Transverse colon (tissue), 4 donors: ENCODE measurements at regions of chr9 and their contacts with region 1.

Region 1: DNA sequence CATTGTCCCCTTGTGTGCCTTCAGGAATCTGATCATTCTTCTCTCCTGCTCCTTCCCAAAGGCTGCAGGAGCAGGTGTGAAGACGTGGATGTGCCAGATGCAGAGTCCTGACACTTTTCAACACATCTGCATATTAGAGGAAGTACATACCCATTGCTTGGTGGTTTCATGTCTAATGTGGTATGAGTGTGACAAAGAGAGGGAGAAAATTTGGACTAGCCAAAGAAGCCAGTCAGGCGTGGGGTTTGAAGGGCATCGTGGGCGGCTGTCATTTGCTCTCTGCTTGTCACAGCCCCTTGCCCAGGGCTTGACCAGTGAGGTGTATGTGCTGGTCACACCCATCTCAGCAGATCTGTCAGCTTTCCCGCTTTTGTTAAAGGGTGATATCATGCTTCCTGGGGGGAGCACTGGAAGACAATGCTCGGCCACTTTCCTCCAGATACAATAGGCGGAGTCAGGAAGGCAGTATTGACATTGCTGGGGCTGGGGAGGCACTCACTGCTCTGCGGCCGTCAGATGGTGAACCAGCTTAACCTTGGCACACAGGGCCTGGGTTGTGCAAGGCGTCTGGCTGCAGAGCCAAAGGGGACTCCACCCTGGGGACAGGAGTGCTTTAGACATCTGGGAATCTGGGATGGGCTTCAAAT is 8.6 kb downstream of the TEK start:
- DNase-seq: peak; percentile 70
- H3K4me3 ChIP-seq: no peak overlapping the region
- H3K27ac ChIP-seq: peak overlapping the region; percentile 4 to 59 (median 22)
- H3K4me1 ChIP-seq: peaks cover 0 to 13% (median 6%) of the 10 kb centered on the region in 4 donors
- H3K27me3 ChIP-seq: no peaks in the 10 kb centered on the region
- CTCF ChIP-seq: no peak
- EP300 ChIP-seq: no peak
- POLR2A ChIP-seq: no peak

Region 2: DNA sequence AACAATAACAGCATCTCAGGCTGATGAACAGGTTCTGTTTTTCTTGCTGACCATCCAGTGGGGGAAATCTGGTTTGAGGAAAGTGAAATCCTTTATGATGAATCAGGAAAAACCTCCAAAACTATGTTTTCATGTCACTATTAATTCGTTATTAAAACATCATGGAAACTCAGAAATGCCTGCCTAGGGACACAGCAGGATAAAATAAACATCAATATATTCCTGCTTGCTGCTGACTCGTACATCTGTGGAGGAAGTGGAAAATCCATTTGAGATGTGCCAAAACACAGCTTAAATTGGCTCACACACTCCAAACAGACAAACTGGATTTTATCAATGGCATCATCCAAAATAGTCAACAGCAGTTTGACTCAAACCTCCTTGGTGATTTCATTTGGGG is 44.4 kb after region 1 on chr9:
- in situ Hi-C with region 1: no loop called
- intact Hi-C with region 1: loop called (anchors 10 kb)
- DNase-seq: no peak
- H3K4me3 ChIP-seq: no peak overlapping the region
- H3K27ac ChIP-seq: no peak overlapping the region
- H3K4me1 ChIP-seq: peaks cover 0 to 6% (median 2%) of the 10 kb centered on the region in 4 donors
- H3K27me3 ChIP-seq: no peaks in the 10 kb centered on the region
- CTCF ChIP-seq: no peak
- EP300 ChIP-seq: no peak
- POLR2A ChIP-seq: no peak

Region 3: DNA sequence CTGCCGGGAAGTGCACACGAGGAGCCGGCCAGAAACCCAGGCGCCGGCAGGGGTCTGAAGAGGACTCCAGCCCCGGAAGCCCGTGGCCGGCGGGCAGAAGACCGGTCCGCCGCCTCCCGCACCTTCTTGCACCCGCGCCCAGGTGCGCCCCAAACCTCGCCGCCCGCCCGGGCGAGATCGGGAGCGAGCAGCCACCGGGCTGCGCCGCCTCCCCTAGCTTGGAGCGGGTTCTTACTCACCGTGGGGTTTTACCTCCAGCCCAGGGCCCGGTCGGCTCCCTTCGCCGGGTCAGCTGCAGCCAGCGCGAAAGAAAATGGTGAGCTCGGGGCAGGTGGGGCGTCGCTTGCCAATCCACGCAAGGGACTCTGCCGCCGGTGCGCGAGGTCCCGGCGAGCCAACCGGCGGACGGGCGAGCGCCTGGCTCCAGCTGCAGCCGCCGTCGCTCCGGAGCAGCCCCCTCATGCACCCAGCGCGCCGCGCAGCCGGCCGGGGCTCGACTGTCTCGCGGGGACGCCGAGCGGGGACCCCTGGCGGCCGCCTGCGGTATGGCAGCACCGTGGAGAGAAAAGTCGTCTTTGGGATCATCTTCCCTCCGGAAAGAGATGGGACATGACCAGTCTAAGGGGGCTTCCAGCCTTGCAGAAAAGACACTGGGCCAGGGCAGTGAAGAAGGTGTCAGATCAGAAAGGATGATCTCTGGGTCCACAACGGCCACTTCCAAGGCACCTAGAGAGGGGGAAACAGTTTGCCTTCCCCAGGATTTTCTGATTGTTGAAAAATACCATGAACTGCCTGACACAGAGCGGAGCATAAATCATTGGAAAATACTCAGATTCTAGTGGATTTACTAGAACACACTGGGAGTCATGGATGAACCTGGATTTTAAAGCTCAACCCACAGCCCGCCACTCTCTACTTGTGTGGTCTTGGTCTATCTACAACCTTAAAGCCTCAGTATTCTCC is 412.0 kb after region 1 on chr9 and contains the start of gene MOB3B:
- in situ Hi-C with region 1: loop called in 1 of 4 experiments (anchors 25 kb)
- intact Hi-C with region 1: no loop called
- DNase-seq: peak; percentile 88
- H3K4me3 ChIP-seq: peak within 1 kb of the TSS; percentile 57 to 90 (median 79)
- H3K27ac ChIP-seq: peak within 1 kb of the TSS; percentile 95 to 97 (median 95)
- H3K4me1 ChIP-seq: peaks cover 13 to 59% (median 23%) of the 10 kb centered on the region in 4 donors
- H3K27me3 ChIP-seq: no peaks in the 10 kb centered on the region
- CTCF ChIP-seq: peak; percentile 84 to 98 (median 92)
- EP300 ChIP-seq: no peak
- POLR2A ChIP-seq: no peak
- total RNA-seq, gene MOB3B: 18.3 to 39.7 (median 29.1) TPM